Endothelial cell of umbilical vein (primary cell): ENCODE measurements at regions of chr10 and their contacts with region 1.

Region 1: GRCh38 chr10:72364239-72364777 is 9.6 kb upstream of the DNAJB12 start:
- DNase-seq: peak; percentile 87
- H3K4me3 ChIP-seq: no peak overlapping the region
- H3K27ac ChIP-seq: peak overlapping the region; percentile 4
- H3K4me1 ChIP-seq: peaks cover 4% of the 10 kb centered on the region
- H3K27me3 ChIP-seq: no peaks in the 10 kb centered on the region
- CTCF ChIP-seq: peak; percentile 89 to 95
- POLR2A ChIP-seq: peak; percentile 74

Region 2: DNA sequence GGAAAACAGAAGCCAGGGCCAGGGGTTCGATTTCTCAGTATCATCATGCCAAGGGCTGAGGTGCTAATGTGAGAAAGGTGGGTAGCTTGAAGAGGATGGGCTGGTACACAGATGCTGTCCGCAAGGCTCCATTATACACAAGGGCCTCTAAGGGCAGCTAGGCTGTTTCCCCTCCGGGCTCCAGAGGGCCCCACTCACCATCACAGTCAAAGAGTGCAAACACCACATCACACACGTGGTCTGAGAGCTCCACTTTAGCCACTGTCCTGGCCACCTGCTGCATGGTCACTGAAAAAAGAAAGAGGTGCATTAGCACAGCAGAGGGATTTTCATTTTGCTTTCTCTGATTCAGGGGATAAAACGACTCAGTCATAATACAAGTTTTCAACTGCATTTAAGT is 11.3 kb after region 1 on chr10:
- CTCF ChIA-PET with region 1: interaction called, 23 read pairs
- POLR2A ChIA-PET with region 1: no interaction called
- dilution Hi-C with region 1: no loop called
- intact Hi-C with region 1: no loop called
- DNase-seq: no peak
- H3K4me3 ChIP-seq: no peak overlapping the region
- H3K27ac ChIP-seq: no peak overlapping the region
- H3K4me1 ChIP-seq: no peaks in the 10 kb centered on the region
- H3K27me3 ChIP-seq: no peaks in the 10 kb centered on the region
- CTCF ChIP-seq: peak in 1 of 2 donors; percentile 12
- POLR2A ChIP-seq: no peak

Region 3: DNA sequence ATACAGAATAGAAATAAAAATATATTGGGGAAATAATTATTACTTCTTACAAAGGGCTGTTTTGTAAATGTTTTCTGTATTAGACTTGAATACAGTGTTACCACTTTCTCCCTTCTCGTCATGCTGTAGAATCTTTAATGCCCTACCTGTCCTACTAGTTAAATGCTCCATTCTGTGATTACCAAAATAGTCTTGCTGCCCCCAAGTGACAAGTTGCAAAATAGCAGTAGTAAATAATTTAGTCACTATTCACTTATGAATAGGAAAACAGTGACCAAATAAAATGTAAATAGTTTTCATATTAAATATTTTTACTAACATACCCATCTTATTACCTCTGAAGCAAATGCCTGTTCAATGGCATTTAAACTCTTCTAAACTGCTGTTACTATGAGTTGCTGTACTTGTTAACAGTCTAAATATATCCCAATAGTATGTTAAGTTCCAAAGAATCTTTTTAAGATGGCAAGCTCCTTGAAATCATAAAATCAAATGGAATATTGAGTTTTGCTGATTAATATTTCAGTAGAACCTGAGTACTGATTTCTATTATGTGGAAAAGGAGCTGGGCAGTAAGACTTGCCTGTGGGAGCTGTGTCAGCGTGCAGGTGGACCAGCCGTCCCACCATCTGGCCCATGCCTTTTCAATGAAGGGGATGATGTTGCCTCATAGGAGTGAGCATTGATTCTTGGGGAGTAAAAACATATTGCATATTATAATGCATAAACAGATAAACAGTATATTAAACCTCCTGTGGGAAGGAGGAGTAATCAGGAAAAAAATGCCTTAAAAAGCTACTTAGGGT is 511.1 kb after region 1 on chr10:
- CTCF ChIA-PET with region 1: interaction called, 16 read pairs
- POLR2A ChIA-PET with region 1: no interaction called
- dilution Hi-C with region 1: no loop called
- intact Hi-C with region 1: loop called (anchors 1 kb)
- DNase-seq: peak; percentile 66
- H3K4me3 ChIP-seq: no peak overlapping the region
- H3K27ac ChIP-seq: no peak overlapping the region
- H3K4me1 ChIP-seq: no peaks in the 10 kb centered on the region
- H3K27me3 ChIP-seq: no peaks in the 10 kb centered on the region
- CTCF ChIP-seq: peak; percentile 13 to 26
- POLR2A ChIP-seq: no peak

Region 4: DNA sequence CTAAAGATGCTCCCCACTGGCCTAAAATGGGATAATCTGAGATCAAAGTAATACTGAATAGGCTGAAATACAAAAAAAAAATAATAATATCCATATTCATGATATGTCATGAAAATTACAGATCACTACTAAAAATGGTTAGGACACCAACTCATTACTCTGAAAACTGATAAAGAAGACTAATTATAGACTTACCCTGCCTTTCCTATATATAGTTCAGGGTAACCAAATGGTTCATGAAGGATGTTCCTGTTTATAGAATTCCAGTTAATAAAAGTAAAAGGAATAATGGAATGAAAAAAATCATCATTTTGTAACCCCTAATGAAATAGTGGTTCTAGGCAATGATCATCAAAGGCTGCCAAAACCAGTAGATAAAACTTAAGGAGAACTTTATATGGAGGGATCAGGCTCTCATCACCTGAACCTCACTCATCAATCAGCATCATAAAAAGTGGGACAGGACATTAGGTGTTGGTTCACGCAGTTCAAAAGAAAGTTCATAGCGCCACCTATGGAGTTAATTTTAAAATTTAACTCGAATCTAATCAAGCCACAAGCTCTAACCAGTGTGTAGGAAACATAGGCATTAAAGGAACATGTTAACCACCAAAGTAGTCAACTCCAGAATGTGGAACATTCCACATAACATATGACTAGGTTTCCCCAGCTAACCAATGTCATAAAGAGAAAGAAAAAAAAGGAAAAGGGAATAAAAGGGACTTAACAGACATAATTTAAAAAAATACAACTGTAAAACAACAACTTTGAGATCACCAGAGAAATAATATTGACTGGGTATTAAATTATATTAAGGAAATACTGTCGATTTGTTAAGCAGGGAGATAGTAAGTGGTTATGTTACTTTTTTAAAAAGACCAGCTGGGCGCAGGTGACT is 696.7 kb after region 1 on chr10:
- CTCF ChIA-PET with region 1: interaction called, 30 read pairs
- POLR2A ChIA-PET with region 1: no interaction called
- dilution Hi-C with region 1: no loop called
- intact Hi-C with region 1: loop called (anchors 1 kb)
- DNase-seq: peak; percentile 59
- H3K4me3 ChIP-seq: no peak overlapping the region
- H3K27ac ChIP-seq: no peak overlapping the region
- H3K4me1 ChIP-seq: peaks cover 9% of the 10 kb centered on the region
- H3K27me3 ChIP-seq: no peaks in the 10 kb centered on the region
- CTCF ChIP-seq: peak in 1 of 2 donors; percentile 40
- POLR2A ChIP-seq: no peak

Region 5: DNA sequence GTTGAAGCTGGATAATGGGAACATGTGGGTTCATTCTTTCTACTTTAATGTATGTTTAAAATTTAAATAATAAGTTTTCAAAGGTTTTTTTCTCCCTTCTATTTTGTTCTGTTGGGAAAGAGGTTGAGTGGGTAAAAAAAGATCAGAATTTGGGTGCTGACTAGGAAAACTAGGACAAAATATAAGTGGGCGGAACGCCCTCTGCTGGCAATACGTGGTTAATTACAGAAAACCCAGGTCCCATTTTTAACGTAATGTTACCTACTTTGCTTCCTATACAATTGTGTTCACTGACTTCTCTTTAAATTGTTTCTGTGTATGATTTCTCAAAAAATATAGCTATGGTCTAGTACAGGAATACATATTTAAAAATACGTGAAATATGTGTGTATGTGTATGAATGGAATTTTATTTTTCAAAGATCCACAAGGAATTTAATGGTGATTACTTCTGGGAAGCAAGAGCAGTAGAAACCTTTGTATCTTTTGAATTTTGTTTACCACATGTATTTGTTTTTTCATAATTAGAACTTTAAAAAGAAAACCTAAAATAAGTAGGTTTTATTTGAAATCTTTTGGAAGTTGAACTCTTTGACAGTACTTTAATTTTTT is 794.8 kb after region 1 on chr10:
- CTCF ChIA-PET with region 1: interaction called, 3 read pairs
- POLR2A ChIA-PET with region 1: no interaction called
- dilution Hi-C with region 1: no loop called
- intact Hi-C with region 1: loop called (anchors 5 kb)
- DNase-seq: peak; percentile 65
- H3K4me3 ChIP-seq: no peak overlapping the region
- H3K27ac ChIP-seq: no peak overlapping the region
- H3K4me1 ChIP-seq: no peaks in the 10 kb centered on the region
- H3K27me3 ChIP-seq: no peaks in the 10 kb centered on the region
- CTCF ChIP-seq: peak; percentile 59 to 60
- POLR2A ChIP-seq: no peak